Adrenal gland (tissue), 19 donors: ENCODE measurements at regions of chr1 and their contacts with region 1.

Region 1: GRCh38 chr1:52141513-52142219 is at the start of gene ZFYVE9:
- DNase-seq: peak; percentile 63 to 79 (median 70)
- H3K4me3 ChIP-seq: peak within 1 kb of the TSS in 3 of 4 donors; percentile 4 to 98 (median 59)
- H3K27ac ChIP-seq: peak within 1 kb of the TSS; percentile 60 to 97 (median 97)
- H3K4me1 ChIP-seq: peaks cover 4 to 20% of the 10 kb centered on the region in 2 donors
- H3K27me3 ChIP-seq: no peaks in the 10 kb centered on the region
- CTCF ChIP-seq: peak in 4 of 6 experiments; percentile 7 to 96 (median 88)
- POLR2A ChIP-seq: peak; percentile 44 to 73
- total RNA-seq, gene ZFYVE9: 13.7 to 28.9 (median 24.1) TPM

Region 2: GRCh38 chr1:52296345-52296744 is 154.7 kb after region 1 on chr1:
- intact Hi-C with region 1: loop called in 1 of 2 experiments (anchors 5 kb)
- DNase-seq: peak in 3 of 7 donors; percentile 21 to 26 (median 22)
- H3K4me3 ChIP-seq: no peak overlapping the region
- H3K27ac ChIP-seq: no peak overlapping the region
- H3K4me1 ChIP-seq: no peaks in the 10 kb centered on the region
- H3K27me3 ChIP-seq: no peaks in the 10 kb centered on the region
- CTCF ChIP-seq: peak; percentile 55 to 83 (median 74)
- POLR2A ChIP-seq: no peak